ENCODE measurements at regions of chr11 and their contacts with region 1.

Region 1: DNA sequence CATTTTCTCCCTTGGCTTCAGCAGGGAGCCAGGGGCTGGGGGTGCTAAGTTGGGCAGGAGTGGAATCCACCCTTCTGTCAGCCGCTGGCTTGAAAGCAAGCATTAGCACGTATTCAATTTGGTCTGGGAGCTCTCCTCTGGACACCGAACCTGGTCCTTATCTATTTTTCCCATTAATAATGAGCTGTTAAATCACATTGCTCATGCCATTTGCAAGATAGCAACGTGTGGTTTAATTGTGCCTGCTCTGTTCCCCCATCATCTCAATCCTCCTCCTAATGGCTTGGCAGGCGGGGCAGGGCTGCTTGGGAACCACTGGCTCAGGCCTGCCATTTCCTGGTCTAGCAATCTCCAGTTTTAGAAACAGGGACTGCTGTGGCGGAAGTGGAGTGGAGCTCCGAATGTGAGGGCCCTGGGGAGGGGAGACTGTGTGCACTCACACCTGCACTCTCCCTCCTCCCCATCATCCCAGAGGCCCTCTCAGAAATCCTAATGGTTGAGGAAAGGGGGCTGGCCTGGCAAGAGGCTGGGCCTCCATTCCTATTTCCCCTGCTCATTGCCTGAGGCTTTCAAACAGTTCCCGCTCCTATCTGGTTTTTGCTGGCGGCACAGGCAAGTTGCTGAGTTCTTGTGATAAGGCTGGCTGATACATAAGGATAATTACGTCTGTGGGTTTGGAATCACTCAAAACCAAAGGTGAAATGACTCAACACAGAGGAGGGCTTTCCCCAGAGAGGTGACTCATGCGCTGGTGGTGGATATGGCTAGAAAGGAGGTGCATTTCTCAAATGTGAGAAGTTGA is 201.2 kb upstream of the E2F8 start:
- DNase-seq: peak; percentile 19
- H3K4me3 Mint-ChIP-seq: no peak overlapping the region
- H3K27ac Mint-ChIP-seq: no peak overlapping the region
- H3K4me1 Mint-ChIP-seq: peaks cover 28% of the 10 kb centered on the region
- H3K27me3 Mint-ChIP-seq: peaks cover 41% of the 10 kb centered on the region

Region 2: DNA sequence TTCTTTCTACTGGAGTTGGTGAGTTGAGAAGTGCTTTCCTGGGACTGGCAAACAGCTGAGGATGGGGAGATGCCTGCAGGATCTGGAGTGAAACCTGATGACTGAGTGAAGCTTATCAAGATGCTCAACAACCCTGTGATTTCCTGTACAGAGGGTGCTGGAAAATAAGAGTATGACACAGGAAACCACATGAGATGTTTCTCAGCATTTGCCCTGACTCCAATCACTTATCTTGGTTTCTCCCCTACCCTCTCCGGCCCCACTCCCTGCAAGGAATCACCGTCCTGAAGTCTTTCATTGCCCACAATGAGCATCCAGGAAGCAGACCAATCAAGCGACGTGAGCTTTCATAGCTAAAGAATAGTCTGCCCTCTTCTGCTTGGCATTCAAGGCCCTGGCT is 381.3 kb before region 1 on chr11 and contains the start of gene MRGPRX2:
- intact Hi-C with region 1: loop called (anchors 10 kb)
- DNase-seq: no peak
- H3K4me3 Mint-ChIP-seq: no peak within 1 kb of the TSS
- H3K27ac Mint-ChIP-seq: no peak within 1 kb of the TSS
- H3K4me1 Mint-ChIP-seq: peaks cover 18% of the 10 kb centered on the region
- H3K27me3 Mint-ChIP-seq: peaks cover 26% of the 10 kb centered on the region
- total RNA-seq, gene MRGPRX2: 0.09 TPM in 1 of 2 replicates, not detected in the other

Region 3: DNA sequence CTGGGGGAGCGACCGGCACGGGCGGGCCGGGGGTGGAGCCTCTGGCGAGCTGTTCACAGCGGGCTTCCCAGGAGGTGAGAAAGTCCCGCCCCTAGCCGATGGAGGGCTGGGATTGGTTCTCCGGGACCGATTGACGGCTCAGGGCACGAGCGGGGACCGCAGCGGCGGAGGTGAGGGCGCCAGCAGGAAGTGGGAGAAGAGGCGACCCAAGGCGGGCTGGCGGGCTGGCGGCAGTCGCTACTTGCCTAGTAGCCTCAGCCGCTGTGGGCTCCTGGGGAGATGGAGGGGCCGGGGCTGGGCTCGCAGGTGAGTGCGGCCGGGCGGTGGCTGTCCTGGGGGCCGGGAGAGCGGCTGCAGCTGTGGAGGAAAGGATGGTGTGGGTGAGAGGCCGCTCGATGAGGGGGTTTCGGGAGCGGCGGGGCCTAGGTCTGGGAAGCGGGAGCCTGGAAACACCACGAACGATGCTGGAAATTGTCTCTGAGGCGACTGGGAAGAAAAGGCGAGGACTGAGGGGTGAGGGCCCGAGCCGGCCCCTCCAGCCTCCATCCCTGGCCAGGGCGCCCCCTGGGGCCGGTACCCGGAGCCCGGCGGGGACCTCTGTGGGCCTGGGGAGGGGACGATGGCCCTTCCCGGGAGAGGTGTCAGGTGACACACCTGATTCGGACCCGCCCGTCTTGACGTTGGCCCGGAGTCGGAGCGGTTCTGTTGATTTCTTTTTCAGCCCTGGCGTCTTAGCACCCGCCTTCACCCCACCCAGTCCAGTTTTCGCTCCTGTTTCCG is 324.8 kb before region 1 on chr11 and contains the start of gene ZDHHC13:
- intact Hi-C with region 1: loop called (anchors 5 kb)
- DNase-seq: peak; percentile 94
- H3K4me3 Mint-ChIP-seq: peak within 1 kb of the TSS; percentile 93
- H3K27ac Mint-ChIP-seq: peak within 1 kb of the TSS; percentile 88
- H3K4me1 Mint-ChIP-seq: peaks cover 48% of the 10 kb centered on the region
- H3K27me3 Mint-ChIP-seq: peaks cover 11% of the 10 kb centered on the region
- total RNA-seq, gene ZDHHC13: 25.4 and 27.8 TPM in 2 replicates

Region 4: DNA sequence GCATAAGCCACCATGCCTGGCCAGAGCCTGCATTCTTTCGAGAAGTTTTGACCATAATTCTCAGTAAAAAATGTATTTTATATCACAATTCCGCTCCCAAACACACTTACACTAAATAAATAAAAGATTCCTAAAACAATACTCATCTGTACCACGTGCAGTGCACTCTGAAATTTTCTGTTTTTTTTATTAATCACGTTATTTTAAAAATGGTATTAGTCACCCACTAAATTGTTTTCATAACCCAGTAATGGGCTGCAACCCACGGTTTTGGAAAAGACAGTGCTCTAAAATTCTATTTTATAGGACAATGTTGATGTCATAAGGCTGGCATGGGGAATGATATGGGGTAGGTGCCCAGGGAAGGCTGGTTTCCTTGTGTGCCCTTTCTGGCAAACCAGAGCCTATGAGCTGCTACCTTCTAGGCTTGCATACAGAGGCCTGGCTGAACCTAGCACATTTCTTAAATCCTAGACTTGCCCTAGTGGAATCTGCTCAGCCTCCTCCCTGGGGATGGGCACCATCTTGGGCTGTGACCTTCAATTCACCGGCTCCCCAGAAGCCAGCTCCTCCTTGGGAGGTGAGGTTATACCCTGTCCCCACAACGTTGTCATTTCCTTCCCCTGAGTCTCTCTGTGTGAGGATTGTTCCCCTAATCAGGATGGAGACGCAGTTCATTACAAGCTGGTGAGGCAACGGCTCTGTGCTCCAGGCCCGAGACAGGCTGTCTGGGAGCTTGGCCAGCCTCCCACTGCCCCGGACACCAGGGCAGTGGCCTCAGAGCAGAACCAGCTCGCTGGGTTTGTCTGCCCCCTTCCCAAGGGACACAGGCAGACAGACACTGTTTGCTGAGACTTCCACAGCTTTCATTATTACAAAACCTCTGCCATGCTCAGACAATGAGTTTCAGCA is 154.1 kb after region 1 on chr11:
- intact Hi-C with region 1: no loop called
- DNase-seq: no peak
- H3K4me3 Mint-ChIP-seq: no peak overlapping the region
- H3K27ac Mint-ChIP-seq: no peak overlapping the region
- H3K4me1 Mint-ChIP-seq: no peaks in the 10 kb centered on the region
- H3K27me3 Mint-ChIP-seq: no peaks in the 10 kb centered on the region

Region 5: DNA sequence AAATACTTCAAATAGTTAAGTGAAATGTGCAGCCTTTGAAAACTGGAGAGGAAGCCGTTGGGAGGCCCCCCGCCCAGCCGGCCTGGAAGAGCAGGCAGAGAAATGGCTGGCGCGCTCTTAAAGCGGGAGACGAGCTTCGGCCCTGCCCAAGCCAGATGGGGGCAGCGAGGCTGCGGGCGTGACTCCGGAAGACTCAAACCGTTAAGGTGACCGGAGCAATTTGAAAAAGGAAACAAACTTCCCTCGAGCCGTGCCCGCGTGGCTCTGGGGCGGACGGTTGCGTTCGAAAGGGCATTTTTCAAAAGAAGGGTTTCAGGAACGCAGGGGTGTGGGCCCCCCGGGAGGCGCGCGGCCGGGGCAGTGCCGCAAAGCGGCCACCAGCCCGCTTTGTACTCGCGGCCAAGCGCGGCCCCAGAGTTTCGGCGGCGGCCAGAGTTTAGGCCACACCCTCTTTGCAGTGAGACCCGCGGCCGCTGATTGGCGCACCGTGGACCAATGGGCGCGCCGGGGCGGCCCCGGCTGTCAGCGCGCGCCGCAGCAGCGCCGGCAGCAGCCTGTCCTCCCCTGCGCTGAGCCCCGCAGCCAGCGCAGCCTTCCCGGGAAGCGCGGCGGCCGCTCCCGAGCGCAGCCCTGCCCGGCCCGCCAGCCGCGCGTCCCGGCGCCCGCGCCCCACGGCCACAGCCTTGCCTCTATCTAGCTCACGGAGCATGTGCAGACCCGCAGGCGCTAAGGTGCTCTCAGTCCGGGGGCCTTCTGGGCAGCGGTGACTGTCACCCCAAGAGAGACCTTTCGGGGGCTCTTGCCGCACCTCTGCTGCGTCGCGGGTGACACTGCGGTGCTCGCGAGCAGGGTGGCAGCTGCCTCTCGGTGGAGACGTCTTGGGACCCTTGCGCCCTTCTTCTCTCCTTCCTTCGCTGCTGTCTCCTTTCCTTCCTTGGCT is 270.6 kb after region 1 on chr11 and contains the start of gene NAV2:
- intact Hi-C with region 1: loop called (anchors 1 kb)
- DNase-seq: peak; percentile 76
- H3K4me3 Mint-ChIP-seq: peak within 1 kb of the TSS; percentile 86
- H3K27ac Mint-ChIP-seq: peak within 1 kb of the TSS; percentile 84
- H3K4me1 Mint-ChIP-seq: peaks cover 20% of the 10 kb centered on the region
- H3K27me3 Mint-ChIP-seq: peaks cover 53% of the 10 kb centered on the region
- total RNA-seq, gene NAV2: 0.02 and 0.39 TPM in 2 replicates

Region 6: DNA sequence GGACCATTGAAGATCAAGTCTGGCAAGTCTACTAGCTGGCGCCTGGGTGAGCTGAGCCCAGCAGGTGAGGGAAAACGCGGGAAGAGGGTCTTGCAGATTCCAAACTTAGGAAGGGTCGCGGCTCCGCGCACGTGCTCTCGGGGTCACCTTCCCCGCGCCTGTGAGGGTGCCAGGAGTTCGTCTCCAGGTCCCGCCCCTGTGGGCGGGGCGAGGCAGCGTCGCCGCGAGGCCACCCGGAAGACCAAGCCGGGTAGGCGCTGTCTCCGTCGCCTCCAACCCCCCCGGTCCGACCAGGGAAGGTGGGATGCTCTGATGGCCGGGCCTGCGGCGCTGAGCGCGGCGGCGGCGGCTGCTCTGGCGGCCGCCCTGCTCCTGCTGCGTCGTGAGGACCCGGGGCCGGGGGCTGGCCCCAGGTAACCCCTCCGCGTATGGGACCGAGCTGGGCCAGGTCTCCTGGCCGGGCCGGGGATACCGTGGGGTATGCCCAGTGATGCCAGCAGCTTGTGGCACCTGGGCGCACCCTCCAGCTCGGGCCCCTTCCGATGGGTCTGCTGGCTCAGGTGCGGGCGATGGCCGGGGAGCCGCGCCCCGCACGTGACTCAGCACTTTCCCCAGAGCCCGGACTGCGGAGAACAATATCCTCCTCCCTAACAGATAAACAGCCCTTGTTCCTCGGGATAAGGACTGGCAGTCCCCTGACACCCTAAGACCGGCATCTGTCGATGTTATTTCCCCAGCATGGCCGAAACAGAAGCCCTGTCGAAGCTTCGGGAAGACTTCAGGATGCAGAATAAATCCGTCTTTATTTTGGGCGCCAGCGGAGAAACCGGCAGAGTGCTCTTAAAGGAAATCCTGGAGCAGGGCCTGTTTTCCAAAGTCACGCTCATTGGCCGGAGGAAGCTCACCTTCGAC is 921.8 kb after region 1 on chr11 and contains the start of gene HTATIP2:
- intact Hi-C with region 1: loop called (anchors 10 kb)
- DNase-seq: peak; percentile 72
- H3K4me3 Mint-ChIP-seq: peak within 1 kb of the TSS; percentile 84
- H3K27ac Mint-ChIP-seq: peak within 1 kb of the TSS; percentile 90
- H3K4me1 Mint-ChIP-seq: peaks cover 60% of the 10 kb centered on the region
- H3K27me3 Mint-ChIP-seq: no peaks in the 10 kb centered on the region
- total RNA-seq, gene HTATIP2: 62.7 and 63.5 TPM in 2 replicates

Measured in activated T-helper 2 cell treated with anti-CD3 and anti-CD28 coated beads, Interferon-gamma antibody, Interleukin-2, Interleukin-4, amounts not matched to agents 10 μg/mL and 5 μg/mL and 100 μg/mL, durations not matched to agents 14 hours and 24 hours and 36 hours (primary cell).